CD4-positive, alpha-beta T cell (primary cell): ENCODE measurements at regions of chr5 and their contacts with region 1.

Region 1: GRCh38 chr5:74766849-74767578 is at the starts of genes GFM2 and NSA2:
- DNase-seq: peak; percentile 86 to 95 (median 91)
- ATAC-seq: peak; percentile 85
- H3K4me3 ChIP-seq: peak within 1 kb of the TSS; percentile 100
- H3K4me3 Mint-ChIP-seq: peak within 1 kb of the TSS; percentile 98
- H3K27ac ChIP-seq: peak within 1 kb of the TSS; percentile 66 to 82
- H3K27ac Mint-ChIP-seq: peak within 1 kb of the TSS; percentile 94
- H3K4me1 ChIP-seq: peaks cover 29% of the 10 kb centered on the region
- H3K4me1 Mint-ChIP-seq: peaks cover 46% of the 10 kb centered on the region
- H3K27me3 ChIP-seq: no peaks in the 10 kb centered on the region
- H3K27me3 Mint-ChIP-seq: no peaks in the 10 kb centered on the region
- CTCF ChIP-seq: no peak
- total RNA-seq, gene GFM2: 10.9 to 12.3 TPM
- total RNA-seq, gene NSA2: 190 to 200 TPM

Region 2: GRCh38 chr5:74684900-74685851 is 81.8 kb before region 1 on chr5 and contains the start of gene HEXB:
- CTCF ChIA-PET with region 1: interaction called, 3 read pairs
- POLR2A ChIA-PET with region 1: interaction called, 7 read pairs
- intact Hi-C with region 1: loop called in 1 of 2 experiments (anchors 5 kb)
- DNase-seq: peak; percentile 61 to 92 (median 82)
- ATAC-seq: peak; percentile 88
- H3K4me3 ChIP-seq: peak within 1 kb of the TSS; percentile 99
- H3K4me3 Mint-ChIP-seq: peak within 1 kb of the TSS; percentile 92
- H3K27ac ChIP-seq: peak within 1 kb of the TSS; percentile 52 to 63
- H3K27ac Mint-ChIP-seq: peak within 1 kb of the TSS; percentile 72
- H3K4me1 ChIP-seq: peaks cover 27% of the 10 kb centered on the region
- H3K4me1 Mint-ChIP-seq: peaks cover 22% of the 10 kb centered on the region
- H3K27me3 ChIP-seq: no peaks in the 10 kb centered on the region
- H3K27me3 Mint-ChIP-seq: no peaks in the 10 kb centered on the region
- CTCF ChIP-seq: no peak
- total RNA-seq, gene HEXB: 31.9 to 33.8 TPM

Region 3: DNA sequence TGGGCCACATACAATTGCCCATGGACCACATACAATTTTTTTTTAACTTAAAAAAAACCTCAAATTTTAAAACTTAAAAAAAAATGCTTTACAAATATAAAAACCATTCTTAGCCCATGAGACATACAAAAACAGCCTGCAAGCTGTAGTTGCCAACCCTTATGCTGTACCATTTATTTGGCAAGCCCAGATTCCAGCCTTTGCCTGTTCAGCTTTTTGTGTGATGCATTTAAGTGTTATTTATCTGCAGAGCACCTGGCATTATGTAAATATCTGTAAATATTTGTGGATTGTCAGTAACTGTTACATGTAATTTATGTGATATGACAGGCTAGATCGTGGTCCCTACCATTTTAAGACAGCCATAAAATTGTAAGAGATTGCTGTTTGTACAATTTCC is 49.4 kb before region 1 on chr5:
- CTCF ChIA-PET with region 1: no interaction called
- POLR2A ChIA-PET with region 1: no interaction called
- intact Hi-C with region 1: no loop called
- DNase-seq: no peak
- ATAC-seq: no peak
- H3K4me3 ChIP-seq: no peak overlapping the region
- H3K4me3 Mint-ChIP-seq: no peak overlapping the region
- H3K27ac ChIP-seq: peak overlapping the region in 1 of 2 donors; percentile 10
- H3K27ac Mint-ChIP-seq: no peak overlapping the region
- H3K4me1 ChIP-seq: no peaks in the 10 kb centered on the region
- H3K4me1 Mint-ChIP-seq: no peaks in the 10 kb centered on the region
- H3K27me3 ChIP-seq: no peaks in the 10 kb centered on the region
- H3K27me3 Mint-ChIP-seq: no peaks in the 10 kb centered on the region
- CTCF ChIP-seq: no peak

Region 4: DNA sequence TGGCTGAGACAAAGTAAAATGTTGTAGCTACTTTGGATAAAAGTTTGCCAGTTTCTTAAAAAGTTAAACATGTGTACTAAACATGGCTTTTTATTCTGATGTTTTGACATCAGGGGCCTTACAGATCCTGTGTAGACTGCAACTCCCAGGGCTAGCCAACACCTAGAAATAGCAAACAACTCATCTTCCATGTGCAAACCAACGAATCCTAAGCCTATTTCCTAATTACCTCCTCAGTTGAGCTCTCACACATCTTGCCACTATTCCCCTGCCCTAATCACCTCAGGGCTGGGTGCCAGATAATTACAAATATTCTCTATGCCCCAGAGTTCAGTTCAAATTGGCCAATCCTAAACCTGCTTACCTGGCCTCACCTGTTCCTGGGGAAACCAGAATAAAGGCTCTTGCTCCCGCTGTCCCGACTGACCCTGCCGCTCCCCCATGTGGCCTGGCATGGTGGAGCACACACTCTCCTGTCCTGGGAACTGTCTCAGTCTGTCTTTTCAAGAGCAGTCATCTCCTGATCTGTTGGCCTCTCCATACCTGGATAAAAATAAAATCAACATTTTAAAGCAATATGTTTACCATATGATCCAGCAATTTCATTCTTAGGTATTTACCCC is 136.3 kb after region 1 on chr5:
- CTCF ChIA-PET with region 1: no interaction called
- POLR2A ChIA-PET with region 1: no interaction called
- intact Hi-C with region 1: loop called in 1 of 2 experiments (anchors 5 kb)
- DNase-seq: peak in 8 of 14 experiments; percentile 5 to 52 (median 26)
- ATAC-seq: peak; percentile 81
- H3K4me3 ChIP-seq: no peak overlapping the region
- H3K4me3 Mint-ChIP-seq: no peak overlapping the region
- H3K27ac ChIP-seq: no peak overlapping the region
- H3K27ac Mint-ChIP-seq: no peak overlapping the region
- H3K4me1 ChIP-seq: no peaks in the 10 kb centered on the region
- H3K4me1 Mint-ChIP-seq: no peaks in the 10 kb centered on the region
- H3K27me3 ChIP-seq: no peaks in the 10 kb centered on the region
- H3K27me3 Mint-ChIP-seq: no peaks in the 10 kb centered on the region
- CTCF ChIP-seq: peak; percentile 37

Region 5: DNA sequence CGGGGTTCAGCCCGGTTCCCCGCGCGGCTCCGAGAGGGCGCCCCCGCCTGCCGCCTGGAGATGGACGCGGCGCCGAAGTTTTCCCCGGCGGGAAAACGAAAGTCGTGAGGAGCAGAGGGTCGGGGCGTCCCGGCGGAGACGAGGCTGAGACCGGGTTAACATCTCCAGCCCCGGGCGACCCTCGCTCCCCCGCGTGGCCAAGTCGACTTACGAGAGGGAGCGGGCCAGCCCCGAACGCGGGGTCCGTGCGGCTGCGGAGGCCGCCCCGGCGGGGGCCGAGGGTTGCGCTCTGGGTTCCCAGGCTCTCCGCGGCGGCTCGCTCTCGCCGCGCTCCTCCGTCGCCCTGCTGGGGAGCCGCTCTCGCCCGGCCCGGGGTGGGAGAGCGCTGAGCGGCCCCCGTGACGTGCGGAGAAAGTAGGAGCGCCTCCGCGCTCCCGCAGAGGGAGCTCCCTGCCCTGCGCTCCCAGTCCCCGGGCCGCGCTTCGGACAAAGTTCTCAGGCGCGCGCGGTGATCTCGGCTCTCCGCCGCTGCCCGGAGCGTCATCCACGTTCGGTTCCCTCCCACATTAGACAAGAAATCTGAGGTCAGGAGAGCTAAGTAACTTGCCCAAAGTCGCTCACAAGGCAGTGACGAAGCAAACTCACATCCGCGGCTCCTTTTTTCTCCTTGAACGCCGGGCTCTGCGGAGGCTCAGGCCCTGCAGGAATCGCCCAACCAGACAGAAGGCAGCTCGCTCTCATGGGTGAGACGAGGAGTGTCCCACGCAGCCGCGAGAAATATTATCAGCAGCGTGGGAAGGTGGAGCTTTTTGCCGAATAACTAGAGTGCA is 286.5 kb after region 1 on chr5:
- CTCF ChIA-PET with region 1: no interaction called
- POLR2A ChIA-PET with region 1: interaction called, 3 read pairs
- intact Hi-C with region 1: loop called in 1 of 2 experiments (anchors 10 kb)
- DNase-seq: peak; percentile 43 to 83 (median 59)
- ATAC-seq: peak; percentile 45
- H3K4me3 ChIP-seq: peak overlapping the region; percentile 68
- H3K4me3 Mint-ChIP-seq: peak overlapping the region; percentile 95
- H3K27ac ChIP-seq: peak overlapping the region; percentile 69 to 89
- H3K27ac Mint-ChIP-seq: peak overlapping the region; percentile 94
- H3K4me1 ChIP-seq: peaks cover 75% of the 10 kb centered on the region
- H3K4me1 Mint-ChIP-seq: peaks cover 85% of the 10 kb centered on the region
- H3K27me3 ChIP-seq: no peaks in the 10 kb centered on the region
- H3K27me3 Mint-ChIP-seq: no peaks in the 10 kb centered on the region
- CTCF ChIP-seq: no peak

Region 6: DNA sequence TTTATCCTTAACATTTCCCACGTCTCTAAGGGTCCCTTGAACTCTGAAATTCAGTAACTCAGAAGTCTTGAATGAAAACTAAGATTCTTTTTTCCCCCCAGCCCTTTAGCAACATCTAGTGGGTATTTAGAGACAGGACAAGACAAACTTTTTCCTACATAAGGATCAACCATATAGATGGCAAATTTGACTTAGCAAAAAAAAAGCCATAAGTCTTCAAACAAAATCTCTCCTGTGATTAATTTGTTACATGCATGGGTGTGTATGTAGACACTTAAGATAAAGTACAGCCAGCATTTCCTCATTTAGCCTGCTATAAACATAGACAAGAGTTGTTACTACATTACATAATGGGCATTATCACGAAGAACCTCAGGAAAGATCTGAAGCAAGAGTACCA is 498.7 kb after region 1 on chr5:
- CTCF ChIA-PET with region 1: no interaction called
- POLR2A ChIA-PET with region 1: no interaction called
- intact Hi-C with region 1: loop called (anchors 1 to 5 kb)
- DNase-seq: peak in 3 of 14 experiments; percentile 57 to 68 (median 65)
- ATAC-seq: peak; percentile 74
- H3K4me3 ChIP-seq: no peak overlapping the region
- H3K4me3 Mint-ChIP-seq: no peak overlapping the region
- H3K27ac ChIP-seq: no peak overlapping the region
- H3K27ac Mint-ChIP-seq: no peak overlapping the region
- H3K4me1 ChIP-seq: no peaks in the 10 kb centered on the region
- H3K4me1 Mint-ChIP-seq: no peaks in the 10 kb centered on the region
- H3K27me3 ChIP-seq: no peaks in the 10 kb centered on the region
- H3K27me3 Mint-ChIP-seq: peaks cover 11% of the 10 kb centered on the region
- CTCF ChIP-seq: peak; percentile 78

Region 7: GRCh38 chr5:75511435-75512384 is 744.7 kb after region 1 on chr5 and contains the starts of genes CERT1 and POLK:
- CTCF ChIA-PET with region 1: no interaction called
- POLR2A ChIA-PET with region 1: no interaction called
- intact Hi-C with region 1: loop called in 1 of 2 experiments (anchors 10 kb)
- DNase-seq: peak; percentile 83 to 98 (median 90)
- ATAC-seq: peak; percentile 88
- H3K4me3 ChIP-seq: peak within 1 kb of the TSS; percentile 92
- H3K4me3 Mint-ChIP-seq: peak within 1 kb of the TSS; percentile 96
- H3K27ac ChIP-seq: peak within 1 kb of the TSS; percentile 78
- H3K27ac Mint-ChIP-seq: peak within 1 kb of the TSS; percentile 99
- H3K4me1 ChIP-seq: peaks cover 17% of the 10 kb centered on the region
- H3K4me1 Mint-ChIP-seq: peaks cover 65% of the 10 kb centered on the region
- H3K27me3 ChIP-seq: no peaks in the 10 kb centered on the region
- H3K27me3 Mint-ChIP-seq: no peaks in the 10 kb centered on the region
- CTCF ChIP-seq: no peak
- total RNA-seq, gene CERT1: 26.5 to 28.7 TPM
- total RNA-seq, gene POLK: 10.0 to 10.3 TPM

Region 8: GRCh38 chr5:76256116-76256889 is 1489.3 kb after region 1 on chr5:
- CTCF ChIA-PET with region 1: no interaction called
- POLR2A ChIA-PET with region 1: no interaction called
- intact Hi-C with region 1: loop called in 1 of 2 experiments (anchors 2 kb)
- DNase-seq: peak; percentile 38 to 84 (median 49)
- ATAC-seq: peak; percentile 99
- H3K4me3 ChIP-seq: no peak overlapping the region
- H3K4me3 Mint-ChIP-seq: no peak overlapping the region
- H3K27ac ChIP-seq: no peak overlapping the region
- H3K27ac Mint-ChIP-seq: no peak overlapping the region
- H3K4me1 ChIP-seq: peaks cover 4% of the 10 kb centered on the region
- H3K4me1 Mint-ChIP-seq: peaks cover 7% of the 10 kb centered on the region
- H3K27me3 ChIP-seq: no peaks in the 10 kb centered on the region
- H3K27me3 Mint-ChIP-seq: no peaks in the 10 kb centered on the region
- CTCF ChIP-seq: peak; percentile 78